Astrocyte of the cerebellum (primary cell): ENCODE measurements at regions of chr20 and their contacts with region 1.

Region 1: GRCh38 chr20:33984182-33984719 is 9.5 kb upstream of the RALY start:
- DNase-seq: no peak
- H3K4me3 ChIP-seq: no peak overlapping the region
- CTCF ChIP-seq: no peak

Region 2: DNA sequence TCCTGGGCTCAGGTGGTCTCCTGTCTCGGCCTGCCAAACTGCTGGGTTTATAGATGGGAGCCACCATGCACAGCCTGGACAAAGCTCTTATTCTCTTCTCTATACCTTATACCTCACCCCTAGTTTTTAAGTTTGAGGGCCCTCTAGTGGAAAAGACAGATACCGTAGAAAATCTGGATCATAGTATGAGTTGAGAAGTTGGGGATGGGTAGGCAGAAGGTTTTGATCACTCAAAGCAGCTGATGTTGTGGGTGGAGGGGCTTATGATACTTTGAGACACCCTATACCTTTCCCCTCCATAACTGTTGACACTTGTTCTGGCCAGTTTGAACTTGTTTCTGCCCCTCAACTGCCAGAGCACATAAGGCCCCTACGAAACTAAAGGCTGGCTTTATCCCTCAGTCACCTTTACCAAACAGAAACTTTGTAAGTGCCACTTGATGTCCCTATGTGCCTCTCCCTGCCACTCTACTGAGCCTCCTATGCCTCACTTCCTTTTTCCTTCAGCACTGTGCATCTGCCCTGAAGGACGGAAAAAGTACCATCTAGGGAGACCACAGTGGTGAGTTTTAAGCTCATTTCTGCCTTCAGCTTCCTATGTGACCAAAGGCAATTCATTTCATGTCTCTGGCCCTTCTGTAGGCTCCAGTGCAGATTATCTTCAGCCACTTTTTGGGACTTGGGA is 38.0 kb after region 1 on chr20:
- in situ Hi-C with region 1: loop called (anchors 5 kb)
- DNase-seq: no peak
- H3K4me3 ChIP-seq: no peak overlapping the region
- CTCF ChIP-seq: peak; percentile 41